H1 (cell line): ENCODE measurements at regions of chr14 and their contacts with region 1.

Region 1: GRCh38 chr14:50812856-50813543 is 18.0 kb downstream of the NIN start:
- DNase-seq: no peak
- H3K4me3 ChIP-seq: peak overlapping the region in 1 of 4 experiments; percentile 5; a peak in 1 of 8 replicates
- H3K27ac ChIP-seq: no peak overlapping the region
- H3K4me1 ChIP-seq: peaks cover 0 to 14% (median 9%) of the 10 kb centered on the region in 4 experiments; a peak in 5 of 7 replicates
- H3K27me3 ChIP-seq: no peaks in the 10 kb centered on the region
- CTCF ChIP-seq: no peak
- EP300 ChIP-seq: no peak
- POLR2A ChIP-seq: no peak
- RAD21 ChIP-seq: no peak

Region 2: GRCh38 chr14:50823051-50823761 is 10.2 kb after region 1 on chr14:
- CTCF ChIA-PET with region 1: interaction called, 11 read pairs
- POLR2A ChIA-PET with region 1: interaction called, 3 read pairs
- DNase-seq: no peak
- H3K4me3 ChIP-seq: no peak overlapping the region
- H3K27ac ChIP-seq: no peak overlapping the region
- H3K4me1 ChIP-seq: peaks cover 6 to 15% (median 10%) of the 10 kb centered on the region in 4 experiments; a peak in 6 of 7 replicates
- H3K27me3 ChIP-seq: peaks cover 3 to 38% (median 13%) of the 10 kb centered on the region in 4 experiments; a peak in 6 of 7 replicates
- CTCF ChIP-seq: no peak
- EP300 ChIP-seq: no peak
- POLR2A ChIP-seq: no peak
- RAD21 ChIP-seq: no peak